H1 (cell line): ENCODE measurements at regions of chr15 and their contacts with region 1.

Region 1: GRCh38 chr15:69380100-69380727 is 33.9 kb upstream of the KIF23 start:
- DNase-seq: peak in 1 of 2 experiments; percentile 55
- H3K4me3 ChIP-seq: no peak overlapping the region
- H3K27ac ChIP-seq: no peak overlapping the region
- H3K4me1 ChIP-seq: no peaks in the 10 kb centered on the region
- H3K27me3 ChIP-seq: no peaks in the 10 kb centered on the region
- CTCF ChIP-seq: peak; percentile 59 to 76 (median 69)
- EP300 ChIP-seq: no peak
- POLR2A ChIP-seq: no peak
- RAD21 ChIP-seq: peak; percentile 44 to 62

Region 2: DNA sequence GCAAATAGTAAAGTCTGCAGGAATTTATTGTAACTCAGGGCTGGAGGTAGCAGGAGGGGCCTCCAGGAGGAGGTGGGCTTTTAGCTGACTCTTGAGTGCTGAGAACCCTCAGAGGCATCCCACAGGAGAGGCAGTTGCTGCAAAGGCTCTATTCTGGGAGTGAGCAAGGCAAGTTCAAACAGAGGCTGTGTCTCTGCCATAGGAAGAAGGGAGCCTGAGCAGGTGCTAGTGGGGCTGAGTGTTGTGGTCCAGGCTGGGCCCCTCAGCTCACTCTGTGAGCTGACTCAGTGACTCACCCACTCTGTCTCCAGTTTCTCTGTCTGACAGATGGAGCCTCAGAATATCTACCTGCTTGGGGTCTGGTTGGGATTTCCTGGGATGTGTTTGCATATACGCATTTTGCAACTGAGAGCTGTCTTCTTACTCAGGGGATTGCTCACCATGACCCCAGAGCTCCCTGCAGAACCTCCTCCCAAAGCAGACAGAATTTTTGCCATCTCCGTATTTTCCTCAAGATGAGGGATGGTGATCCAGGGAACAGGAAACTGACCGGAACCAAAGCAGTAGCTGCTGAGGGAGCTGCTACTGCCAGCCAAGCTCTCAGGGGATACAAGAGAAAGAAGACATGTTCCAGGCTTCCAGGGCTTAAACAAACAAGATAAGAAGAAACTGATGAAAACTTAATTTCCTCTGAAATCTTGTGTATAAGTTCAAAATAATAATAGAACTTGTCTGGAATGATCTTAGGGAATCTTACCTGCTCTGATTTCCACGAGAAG is 379.3 kb before region 1 on chr15:
- CTCF ChIA-PET with region 1: no interaction called
- POLR2A ChIA-PET with region 1: no interaction called
- DNase-seq: no peak
- H3K4me3 ChIP-seq: no peak overlapping the region
- H3K27ac ChIP-seq: no peak overlapping the region
- H3K4me1 ChIP-seq: peaks cover 2 to 16% (median 9%) of the 10 kb centered on the region in 4 experiments
- H3K27me3 ChIP-seq: no peaks in the 10 kb centered on the region
- CTCF ChIP-seq: no peak
- EP300 ChIP-seq: no peak
- POLR2A ChIP-seq: no peak
- RAD21 ChIP-seq: no peak

Region 3: GRCh38 chr15:69394556-69395282 is 14.5 kb after region 1 on chr15:
- CTCF ChIA-PET with region 1: interaction called, 43 read pairs
- POLR2A ChIA-PET with region 1: no interaction called
- DNase-seq: peak; percentile 67 to 100
- H3K4me3 ChIP-seq: peak overlapping the region in 1 of 4 experiments; percentile 26; a peak in 1 of 8 replicates
- H3K27ac ChIP-seq: no peak overlapping the region
- H3K4me1 ChIP-seq: peaks cover 0 to 17% (median 7%) of the 10 kb centered on the region in 4 experiments; a peak in 5 of 7 replicates
- H3K27me3 ChIP-seq: no peaks in the 10 kb centered on the region
- CTCF ChIP-seq: peak; percentile 88 to 97 (median 91)
- EP300 ChIP-seq: no peak
- POLR2A ChIP-seq: no peak
- RAD21 ChIP-seq: peak; percentile 88 to 95